ENCODE measurements at regions of chr1 and their contacts with region 1.

Region 1: DNA sequence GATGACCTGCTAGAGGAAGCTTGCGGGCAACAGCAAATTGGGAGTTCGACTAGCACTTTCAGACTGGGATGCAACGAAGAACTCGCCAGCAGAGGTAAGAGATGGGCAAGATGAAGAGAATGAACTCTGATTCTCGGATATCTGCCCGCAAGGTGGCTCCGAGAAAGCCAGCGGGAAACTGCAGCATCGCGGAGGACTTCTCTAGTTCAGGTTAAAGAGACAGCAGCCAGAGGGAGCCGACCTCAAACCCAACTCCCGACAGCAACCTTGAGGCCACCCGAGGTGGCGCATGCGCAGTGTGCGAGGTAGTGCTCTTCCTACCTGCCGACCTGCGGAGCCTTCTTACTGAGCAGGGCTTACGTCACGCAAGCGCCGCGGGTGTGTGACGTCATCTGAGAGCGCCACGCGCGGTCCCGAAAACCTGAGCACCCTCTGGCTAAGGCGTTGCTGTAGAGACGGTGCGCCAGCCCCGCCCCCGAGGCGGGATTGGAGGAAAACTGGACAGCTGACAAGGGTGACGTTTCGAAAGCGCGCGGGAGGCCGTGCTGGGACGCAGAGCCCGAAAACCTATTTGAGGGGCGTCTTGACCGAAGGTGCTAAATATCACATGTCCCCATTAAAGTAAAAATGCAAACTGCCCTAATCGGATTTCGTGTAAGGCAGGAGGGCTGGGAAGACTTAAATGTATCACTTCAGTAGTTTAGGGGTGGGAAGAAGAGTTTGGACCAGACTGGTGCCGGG is 110.5 kb upstream of the SLC25A33 start:
- DNase-seq: peak; percentile 100
- ATAC-seq: peak; percentile 91
- H3K4me3 Mint-ChIP-seq: peak overlapping the region; percentile 86
- H3K27ac Mint-ChIP-seq: peak overlapping the region; percentile 98
- H3K4me1 Mint-ChIP-seq: peaks cover 47% of the 10 kb centered on the region
- H3K27me3 Mint-ChIP-seq: no peaks in the 10 kb centered on the region

Region 2: DNA sequence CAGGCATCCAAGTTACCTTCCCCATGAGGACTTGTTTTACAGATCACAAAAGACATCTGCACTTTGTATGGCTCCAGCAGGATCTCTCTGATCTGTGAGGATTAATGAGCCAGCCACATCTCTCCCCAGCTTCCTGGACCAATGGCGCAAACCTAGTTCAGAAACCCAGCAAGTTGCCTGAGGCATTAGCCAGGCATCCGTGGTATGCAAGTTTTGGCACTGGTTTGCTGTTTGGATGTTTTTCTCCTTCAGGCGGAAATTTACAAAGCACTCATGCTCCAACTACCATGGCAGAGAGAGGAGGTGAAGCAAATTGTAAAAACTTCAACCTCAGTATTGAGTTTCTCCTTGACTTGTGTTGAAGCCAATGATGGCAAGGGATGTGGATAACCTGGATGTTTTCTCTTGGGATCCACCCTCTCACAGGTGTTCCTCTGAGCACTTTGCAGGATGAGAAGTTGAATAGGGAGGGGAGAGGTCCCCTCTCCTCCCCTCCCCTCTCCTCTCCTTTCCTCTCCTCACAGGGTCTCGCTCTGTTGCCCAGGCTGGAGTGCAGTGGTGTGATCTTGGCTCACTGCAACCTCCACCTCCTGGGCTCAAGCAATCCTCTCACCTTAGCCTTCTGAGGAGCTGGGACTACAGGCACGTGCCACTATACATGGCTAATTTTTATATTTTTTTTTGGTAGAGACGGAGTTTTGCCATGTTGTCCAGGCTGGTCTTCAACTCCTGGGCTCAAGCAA is 524.7 kb before region 1 on chr1:
- CTCF ChIA-PET with region 1: no interaction called
- POLR2A ChIA-PET with region 1: no interaction called
- intact Hi-C with region 1: loop called in 1 of 2 experiments (anchors 10 kb)
- DNase-seq: no peak
- ATAC-seq: no peak
- H3K4me3 Mint-ChIP-seq: no peak overlapping the region
- H3K27ac Mint-ChIP-seq: peak overlapping the region; percentile 48
- H3K4me1 Mint-ChIP-seq: peaks cover 46% of the 10 kb centered on the region
- H3K27me3 Mint-ChIP-seq: no peaks in the 10 kb centered on the region

Region 3: GRCh38 chr1:9234223-9235095 is 194.3 kb before region 1 on chr1 and contains the start of gene H6PD:
- CTCF ChIA-PET with region 1: interaction called, 3 read pairs
- POLR2A ChIA-PET with region 1: no interaction called
- intact Hi-C with region 1: loop called in 1 of 2 experiments (anchors 1 kb)
- DNase-seq: peak; percentile 80
- ATAC-seq: peak; percentile 76
- H3K4me3 Mint-ChIP-seq: peak within 1 kb of the TSS; percentile 82
- H3K27ac Mint-ChIP-seq: peak within 1 kb of the TSS; percentile 90
- H3K4me1 Mint-ChIP-seq: peaks cover 41% of the 10 kb centered on the region
- H3K27me3 Mint-ChIP-seq: no peaks in the 10 kb centered on the region
- total RNA-seq, gene H6PD: 8.8 to 9.6 TPM

Region 4: DNA sequence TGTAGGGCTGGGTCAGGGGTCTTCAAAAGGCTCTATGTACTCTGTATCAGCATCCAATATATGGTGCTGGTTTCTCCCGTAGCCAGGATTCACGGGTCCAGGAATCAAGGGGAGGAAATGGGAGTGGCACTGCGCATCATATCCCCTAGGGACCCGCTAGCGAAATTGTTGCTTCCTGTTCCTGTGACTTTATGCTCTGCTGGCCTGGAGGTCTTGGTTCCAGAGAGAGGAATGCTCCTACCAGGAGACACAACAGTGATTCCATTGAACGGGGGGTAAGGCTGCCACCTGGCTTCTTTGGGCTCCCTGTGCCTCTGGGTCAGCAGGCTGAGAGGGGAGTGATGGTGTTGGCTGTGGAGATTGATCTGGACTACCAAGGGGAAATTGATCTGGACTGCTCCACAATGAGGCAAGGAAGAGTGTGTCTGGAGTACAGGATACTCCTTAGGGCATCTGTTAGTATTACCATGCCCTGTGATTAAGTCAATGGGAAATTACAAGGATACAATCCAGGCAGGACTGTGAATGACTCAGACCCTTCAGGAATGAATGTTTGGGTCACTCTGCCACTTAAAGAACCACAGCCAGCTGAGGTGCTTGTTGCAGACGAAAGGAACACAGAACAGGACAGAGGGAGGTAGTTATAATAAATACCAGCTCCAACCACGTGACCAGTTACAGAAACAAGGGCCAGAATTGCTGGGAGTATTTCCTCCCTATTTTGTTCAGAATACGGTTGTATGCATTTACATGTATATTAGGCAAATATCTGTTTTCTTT is 125.8 kb before region 1 on chr1:
- CTCF ChIA-PET with region 1: no interaction called
- POLR2A ChIA-PET with region 1: no interaction called
- intact Hi-C with region 1: no loop called
- DNase-seq: no peak
- ATAC-seq: no peak
- H3K4me3 Mint-ChIP-seq: no peak overlapping the region
- H3K27ac Mint-ChIP-seq: no peak overlapping the region
- H3K4me1 Mint-ChIP-seq: peaks cover 11% of the 10 kb centered on the region
- H3K27me3 Mint-ChIP-seq: no peaks in the 10 kb centered on the region

Region 5: DNA sequence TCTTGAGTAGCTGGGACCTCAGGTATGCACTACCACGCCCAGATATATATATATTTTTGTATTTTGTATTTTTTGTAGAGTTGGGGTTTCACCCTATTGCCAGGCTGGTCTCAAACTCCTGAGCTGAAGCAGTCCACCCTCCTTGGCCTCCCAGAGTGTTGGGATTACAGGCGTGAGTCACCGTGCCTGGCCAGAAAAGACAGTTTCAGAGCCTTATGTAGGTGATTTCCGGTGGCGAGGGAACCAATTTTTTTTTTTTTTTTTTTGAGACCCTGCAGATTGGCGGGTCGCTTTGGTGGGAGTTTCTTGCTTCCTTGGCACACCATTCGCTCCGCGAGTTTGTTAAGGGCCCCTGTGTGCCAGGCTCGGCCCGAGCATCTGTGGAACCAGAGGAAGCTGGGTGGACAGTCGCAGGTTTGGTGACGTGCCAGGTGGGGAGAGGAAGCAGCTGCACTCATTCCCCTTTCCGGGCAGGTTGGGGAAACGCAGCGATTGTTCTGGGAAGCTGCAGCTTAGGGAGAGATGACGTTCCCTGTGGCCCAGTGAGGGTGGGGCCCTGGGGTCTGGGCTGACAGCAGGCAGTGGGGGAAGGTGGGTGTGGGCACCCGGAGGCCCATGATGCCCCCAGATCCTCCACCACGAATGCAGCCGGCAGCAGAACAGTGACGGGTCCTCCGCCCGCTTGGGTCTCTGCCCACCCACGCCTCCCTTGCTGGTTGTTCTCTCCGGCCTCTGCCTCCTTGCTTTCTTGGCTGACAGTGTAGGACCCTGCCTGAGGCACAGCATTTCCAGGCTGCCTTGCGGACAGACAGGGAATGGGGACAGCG is 111.0 kb before region 1 on chr1:
- CTCF ChIA-PET with region 1: no interaction called
- POLR2A ChIA-PET with region 1: no interaction called
- intact Hi-C with region 1: loop called in 1 of 2 experiments (anchors 1 kb)
- DNase-seq: peak; percentile 42
- ATAC-seq: no peak
- H3K4me3 Mint-ChIP-seq: peak overlapping the region; percentile 18
- H3K27ac Mint-ChIP-seq: peak overlapping the region; percentile 42
- H3K4me1 Mint-ChIP-seq: peaks cover 38% of the 10 kb centered on the region
- H3K27me3 Mint-ChIP-seq: no peaks in the 10 kb centered on the region

Region 6: DNA sequence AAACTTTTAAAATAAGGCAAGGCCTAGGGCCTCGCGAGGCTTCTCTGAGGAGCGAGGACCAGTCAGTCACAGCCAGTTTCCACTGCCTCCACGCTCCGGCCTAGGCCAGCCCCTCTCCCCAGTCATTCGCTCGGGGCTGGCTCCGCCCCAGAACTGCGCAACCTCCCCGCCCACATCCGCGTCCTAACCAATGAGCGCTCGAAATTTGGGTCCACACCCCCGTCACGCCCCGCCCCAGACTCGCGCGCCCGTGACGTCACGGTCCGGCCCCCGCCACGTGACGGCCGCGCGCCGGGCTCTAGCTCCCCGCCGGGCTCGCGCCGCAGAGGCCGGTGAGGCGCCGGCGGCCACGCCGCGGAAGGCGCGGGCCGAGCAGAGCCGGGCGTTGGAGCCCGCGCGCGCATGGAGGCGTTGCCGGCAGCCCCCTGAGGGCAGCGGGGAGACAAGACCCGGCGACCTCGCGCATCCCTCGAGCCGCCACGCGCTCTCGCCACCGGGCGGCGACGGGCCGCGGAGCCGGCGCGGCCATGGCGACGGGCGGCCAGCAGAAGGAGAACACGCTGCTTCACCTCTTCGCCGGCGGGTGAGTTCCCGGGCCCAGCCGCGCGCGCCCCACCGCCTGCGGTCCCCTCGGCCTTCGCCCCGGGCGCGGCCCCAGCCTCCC is 110.5 kb after region 1 on chr1 and contains the start of gene SLC25A33:
- CTCF ChIA-PET with region 1: no interaction called
- POLR2A ChIA-PET with region 1: no interaction called
- intact Hi-C with region 1: loop called in 1 of 2 experiments (anchors 1 kb)
- DNase-seq: peak; percentile 99
- ATAC-seq: peak; percentile 99
- H3K4me3 Mint-ChIP-seq: peak within 1 kb of the TSS; percentile 80
- H3K27ac Mint-ChIP-seq: peak within 1 kb of the TSS; percentile 78
- H3K4me1 Mint-ChIP-seq: peaks cover 30% of the 10 kb centered on the region
- H3K27me3 Mint-ChIP-seq: no peaks in the 10 kb centered on the region
- total RNA-seq, gene SLC25A33: 4.4 to 6.1 TPM